ENCODE measurements at regions of chr13 and their contacts with region 1.

Region 1: DNA sequence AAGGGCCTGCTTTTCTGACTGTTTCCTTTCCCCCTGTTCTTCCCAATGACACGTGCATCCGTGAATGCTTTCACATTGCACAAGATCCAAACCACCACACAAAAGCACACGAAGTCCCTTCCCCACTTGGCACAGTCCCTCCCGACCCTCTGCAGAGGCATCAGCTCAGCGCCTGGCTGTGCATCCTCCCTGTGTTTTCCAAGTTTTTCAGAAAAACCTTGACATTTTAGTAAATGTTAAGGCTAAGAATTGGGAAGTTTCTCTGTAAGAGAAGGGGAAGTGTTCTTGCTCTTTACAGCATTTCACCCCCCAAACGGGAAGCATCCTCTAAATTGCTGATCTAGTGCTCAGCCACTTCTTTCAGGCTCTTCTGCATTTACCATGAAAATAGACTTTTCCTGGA is 94.5 kb upstream of the TM9SF2 start:
- DNase-seq: no peak
- H3K4me3 ChIP-seq: no peak overlapping the region
- CTCF ChIP-seq: no peak

Region 2: GRCh38 chr13:99354371-99354951 is 52.3 kb before region 1 on chr13:
- in situ Hi-C with region 1: loop called (anchors 5 kb)
- DNase-seq: no peak
- H3K4me3 ChIP-seq: no peak overlapping the region
- CTCF ChIP-seq: no peak

Region 3: DNA sequence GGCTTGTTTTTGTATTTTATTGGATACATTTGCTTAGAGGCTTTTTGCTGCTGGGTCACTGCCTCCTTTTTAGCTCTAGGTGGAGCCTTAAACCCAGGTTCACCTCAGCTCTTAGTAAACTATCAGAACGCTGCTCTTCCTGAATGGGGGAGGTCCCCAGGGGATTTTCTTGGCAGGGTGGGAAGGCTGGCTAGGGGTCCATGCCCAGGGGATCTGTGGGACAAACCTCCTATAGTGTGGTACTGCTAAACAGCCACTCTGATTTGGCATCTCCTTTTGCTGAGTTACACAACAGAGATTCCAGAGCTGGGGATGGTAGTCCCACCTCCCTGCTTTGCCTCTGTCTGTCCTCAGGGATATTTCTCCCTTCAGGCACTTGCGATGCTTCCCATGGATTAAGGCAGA is 359.8 kb after region 1 on chr13:
- in situ Hi-C with region 1: no loop called
- DNase-seq: no peak
- H3K4me3 ChIP-seq: no peak overlapping the region
- CTCF ChIP-seq: peak; percentile 50

Region 4: DNA sequence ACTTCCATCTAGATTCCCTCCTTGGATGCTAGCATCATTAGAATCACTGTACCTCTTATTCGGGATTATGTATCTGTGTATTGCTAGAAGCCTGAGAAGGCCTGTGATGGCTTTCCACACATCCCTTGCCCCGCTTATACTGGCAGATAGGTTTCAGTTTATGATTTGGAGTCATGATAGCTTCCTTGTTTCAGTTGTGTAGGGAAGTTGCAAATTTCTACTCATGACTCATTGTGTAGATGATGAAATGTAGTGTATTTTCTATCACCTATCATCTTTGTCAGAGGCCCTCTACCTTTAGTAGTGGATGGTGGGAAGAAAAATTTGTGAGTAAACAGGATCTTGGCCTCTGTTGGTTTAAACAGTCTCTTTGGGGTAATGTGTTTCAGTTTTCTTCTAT is 1016.6 kb after region 1 on chr13:
- in situ Hi-C with region 1: no loop called
- DNase-seq: no peak
- H3K4me3 ChIP-seq: no peak overlapping the region
- CTCF ChIP-seq: no peak

Measured in astrocyte of the cerebellum (primary cell).